Stomach (tissue), 19 donors: ENCODE measurements at regions of chr2 and their contacts with region 1.

Region 1: GRCh38 chr2:177263451-177264208 is 897 bp downstream of the NFE2L2 start:
- DNase-seq: peak; percentile 99
- H3K4me3 ChIP-seq: peak overlapping the region; percentile 68 to 99 (median 82)
- H3K27ac ChIP-seq: peak overlapping the region; percentile 98 to 100 (median 99)
- H3K4me1 ChIP-seq: peaks cover 43 to 71% (median 57%) of the 10 kb centered on the region in 4 donors
- H3K27me3 ChIP-seq: no peaks in the 10 kb centered on the region
- CTCF ChIP-seq: peak in 5 of 7 experiments; percentile 73 to 92 (median 86)
- EP300 ChIP-seq: peak; percentile 64
- POLR2A ChIP-seq: no peak

Region 2: GRCh38 chr2:177212106-177212890 is 51.3 kb before region 1 on chr2 and contains the start of gene HNRNPA3:
- intact Hi-C with region 1: loop called (anchors 5 kb)
- DNase-seq: peak; percentile 99 to 100
- H3K4me3 ChIP-seq: peak within 1 kb of the TSS; percentile 56 to 92 (median 66)
- H3K27ac ChIP-seq: peak within 1 kb of the TSS; percentile 99 to 100 (median 100)
- H3K4me1 ChIP-seq: peaks cover 41 to 50% (median 46%) of the 10 kb centered on the region in 4 donors
- H3K27me3 ChIP-seq: no peaks in the 10 kb centered on the region
- CTCF ChIP-seq: peak in 2 of 7 experiments; percentile 6 to 35
- EP300 ChIP-seq: peak; percentile 46
- POLR2A ChIP-seq: peak in 2 of 4 donors; percentile 80 to 89
- total RNA-seq, gene HNRNPA3: 22.6 to 178 (median 54.3) TPM

Region 3: DNA sequence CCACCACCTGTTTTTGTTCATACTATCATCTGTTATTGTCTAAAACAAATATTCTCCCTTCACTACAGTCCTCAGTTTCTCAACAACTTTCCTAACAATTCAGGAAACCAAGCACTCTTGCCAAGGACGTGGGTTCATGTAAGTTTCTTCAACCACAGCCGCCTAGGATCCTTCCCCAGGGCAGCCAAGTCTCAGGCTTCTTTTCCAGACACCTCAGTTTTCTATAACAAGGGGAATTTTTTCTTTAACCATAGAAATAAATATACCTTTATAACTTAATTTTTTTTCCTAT is 89.5 kb after region 1 on chr2:
- intact Hi-C with region 1: no loop called
- DNase-seq: peak in 1 of 2 donors; percentile 64
- H3K4me3 ChIP-seq: no peak overlapping the region
- H3K27ac ChIP-seq: peak overlapping the region in 4 of 5 donors; percentile 0 to 67 (median 31)
- H3K4me1 ChIP-seq: peaks cover 6 to 20% (median 16%) of the 10 kb centered on the region in 4 donors
- H3K27me3 ChIP-seq: no peaks in the 10 kb centered on the region
- CTCF ChIP-seq: no peak
- EP300 ChIP-seq: no peak
- POLR2A ChIP-seq: no peak

Region 4: DNA sequence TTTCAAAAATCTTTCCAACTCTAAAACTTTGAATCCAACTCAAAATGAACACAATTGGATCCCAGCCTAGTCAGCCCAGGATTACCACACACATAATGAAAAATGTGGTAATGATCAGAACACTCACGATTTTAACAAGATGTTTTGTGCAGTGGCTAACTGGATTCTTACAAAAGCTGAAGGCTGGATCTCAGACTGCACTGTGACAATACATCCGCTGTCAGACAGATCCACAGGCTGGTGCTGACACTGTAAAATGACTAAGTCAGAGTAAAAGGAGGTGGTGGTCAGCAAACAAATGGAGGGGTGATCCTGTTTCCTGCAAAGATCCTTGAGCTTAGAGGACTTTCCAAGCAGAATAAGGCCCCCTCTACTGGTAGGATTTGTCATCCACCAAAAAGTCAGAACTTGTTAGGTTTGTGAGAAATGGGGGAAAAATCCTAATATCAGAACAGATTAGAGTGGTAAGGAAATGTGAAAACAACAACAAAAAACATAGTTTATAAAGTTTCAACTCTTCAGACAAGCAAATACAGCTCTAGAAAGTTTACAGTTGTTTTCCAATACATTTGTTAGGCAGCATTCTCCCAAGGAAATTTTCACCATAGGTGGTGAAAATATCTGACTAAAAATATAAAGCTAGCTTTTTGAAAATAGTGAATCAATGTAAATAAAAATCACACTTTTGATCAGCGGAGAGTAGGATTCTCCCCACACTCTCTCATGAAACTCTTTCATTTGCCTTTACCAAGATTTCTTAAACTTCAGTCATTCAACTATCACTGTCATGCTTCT is 340.8 kb after region 1 on chr2:
- intact Hi-C with region 1: no loop called
- DNase-seq: peak in 1 of 2 donors; percentile 84
- H3K4me3 ChIP-seq: no peak overlapping the region
- H3K27ac ChIP-seq: peak overlapping the region in 1 of 5 donors; percentile 5
- H3K4me1 ChIP-seq: peaks cover 0 to 7% (median 0%) of the 10 kb centered on the region in 4 donors
- H3K27me3 ChIP-seq: no peaks in the 10 kb centered on the region
- CTCF ChIP-seq: peak in 5 of 7 experiments; percentile 32 to 51 (median 49)
- EP300 ChIP-seq: no peak
- POLR2A ChIP-seq: no peak